PC-3 (cell line): ENCODE measurements at regions of chr15 and their contacts with region 1.

Region 1: DNA sequence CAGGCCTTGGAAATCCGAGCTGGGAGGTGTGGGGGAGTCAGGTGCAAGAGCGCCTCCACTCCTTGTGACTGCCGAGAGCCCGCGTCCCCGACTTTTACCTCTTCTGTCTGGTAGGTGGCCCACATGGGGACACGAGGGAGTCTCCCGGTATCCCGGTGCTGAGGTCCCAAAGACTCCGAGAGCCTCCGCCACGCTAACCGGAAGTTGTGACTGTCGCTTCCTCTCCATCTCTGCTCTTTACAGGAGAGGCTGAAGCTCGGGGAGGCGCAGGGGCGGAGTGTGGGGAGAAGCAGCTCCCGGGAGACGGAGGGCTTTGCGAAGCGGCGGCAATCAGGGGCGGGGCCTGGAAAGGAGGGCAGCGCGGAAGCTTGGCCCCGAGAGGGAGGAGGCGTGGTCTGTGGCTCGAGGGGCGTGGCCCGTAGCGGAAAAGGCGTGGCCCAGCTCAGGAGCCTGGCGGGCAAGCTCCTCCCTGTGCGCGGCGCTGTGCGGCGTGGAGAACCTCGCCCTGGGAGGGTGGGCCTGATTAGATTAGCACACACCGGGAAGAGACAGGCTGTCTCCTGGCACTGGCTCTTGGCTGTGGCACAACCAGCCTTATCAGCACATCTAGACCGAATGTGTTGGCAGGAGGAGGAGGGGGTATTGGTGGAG is 143.9 kb downstream of the GABRB3 start:
- DNase-seq: peak; percentile 91
- ATAC-seq: peak; percentile 78
- H3K4me3 ChIP-seq: peak overlapping the region; percentile 63
- H3K27ac ChIP-seq: peak overlapping the region; percentile 96
- H3K4me1 ChIP-seq: peaks cover 19% of the 10 kb centered on the region
- H3K27me3 ChIP-seq: no peaks in the 10 kb centered on the region
- CTCF ChIP-seq: 0 out of 2 replicates have a peak, but pooled peaks have one; percentile 15

Region 2: GRCh38 chr15:26082221-26083109 is 546.5 kb before region 1 on chr15:
- CTCF ChIA-PET with region 1: no interaction called
- POLR2A ChIA-PET with region 1: no interaction called
- intact Hi-C with region 1: loop called (anchors 10 kb)
- DNase-seq: peak; percentile 97
- ATAC-seq: peak; percentile 96
- H3K4me3 ChIP-seq: peak overlapping the region; percentile 71
- H3K27ac ChIP-seq: peak overlapping the region; percentile 16
- H3K4me1 ChIP-seq: peaks cover 15% of the 10 kb centered on the region
- H3K27me3 ChIP-seq: no peaks in the 10 kb centered on the region
- CTCF ChIP-seq: no peak

Region 3: GRCh38 chr15:26372706-26373105 is 256.3 kb before region 1 on chr15:
- CTCF ChIA-PET with region 1: no interaction called
- POLR2A ChIA-PET with region 1: no interaction called
- intact Hi-C with region 1: no loop called
- DNase-seq: no peak
- ATAC-seq: no peak
- H3K4me3 ChIP-seq: no peak overlapping the region
- H3K27ac ChIP-seq: no peak overlapping the region
- H3K4me1 ChIP-seq: no peaks in the 10 kb centered on the region
- H3K27me3 ChIP-seq: no peaks in the 10 kb centered on the region
- CTCF ChIP-seq: no peak

Region 4: GRCh38 chr15:26551473-26551872 is 77.5 kb before region 1 on chr15:
- CTCF ChIA-PET with region 1: no interaction called
- POLR2A ChIA-PET with region 1: no interaction called
- intact Hi-C with region 1: no loop called
- DNase-seq: no peak
- ATAC-seq: no peak
- H3K4me3 ChIP-seq: no peak overlapping the region
- H3K27ac ChIP-seq: no peak overlapping the region
- H3K4me1 ChIP-seq: no peaks in the 10 kb centered on the region
- H3K27me3 ChIP-seq: no peaks in the 10 kb centered on the region
- CTCF ChIP-seq: no peak

Region 5: GRCh38 chr15:26615188-26615926 is 13.6 kb before region 1 on chr15:
- CTCF ChIA-PET with region 1: no interaction called
- POLR2A ChIA-PET with region 1: no interaction called
- intact Hi-C with region 1: loop called (anchors 1 kb)
- DNase-seq: peak; percentile 24
- ATAC-seq: no peak
- H3K4me3 ChIP-seq: no peak overlapping the region
- H3K27ac ChIP-seq: peak overlapping the region; percentile 21; the same call in 1 of the 2 replicates
- H3K4me1 ChIP-seq: peaks cover 20% of the 10 kb centered on the region
- H3K27me3 ChIP-seq: no peaks in the 10 kb centered on the region
- CTCF ChIP-seq: no peak

Region 6: DNA sequence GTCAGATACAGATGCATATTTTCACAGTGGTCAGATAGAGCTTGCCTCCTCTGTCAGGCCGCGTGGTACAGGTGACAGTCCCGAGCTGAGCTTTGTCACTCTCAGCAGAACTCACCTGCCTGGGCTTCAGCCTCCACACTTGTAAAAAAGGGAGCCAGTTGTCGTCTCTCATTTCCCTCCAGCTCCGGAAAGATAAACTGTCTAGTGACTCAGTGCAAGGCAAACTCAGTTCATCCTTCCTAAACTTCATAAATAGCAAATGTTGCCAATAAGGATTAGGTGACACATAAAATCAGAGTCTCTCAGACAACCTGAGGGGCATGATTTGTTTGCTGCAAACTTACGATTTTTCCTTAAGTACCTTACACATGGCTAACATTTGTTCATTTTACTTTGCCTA is 27.1 kb after region 1 on chr15:
- CTCF ChIA-PET with region 1: no interaction called
- POLR2A ChIA-PET with region 1: no interaction called
- intact Hi-C with region 1: loop called (anchors 2 kb)
- DNase-seq: peak; percentile 58
- ATAC-seq: peak; percentile 81
- H3K4me3 ChIP-seq: peak overlapping the region; percentile 14; the same call in 1 of the 2 replicates
- H3K27ac ChIP-seq: no peak overlapping the region
- H3K4me1 ChIP-seq: no peaks in the 10 kb centered on the region
- H3K27me3 ChIP-seq: no peaks in the 10 kb centered on the region; the same call in 1 of the 2 replicates
- CTCF ChIP-seq: no peak